HEK293 (cell line): ENCODE measurements at regions of chr7 and their contacts with region 1.

Region 1: GRCh38 chr7:74464943-74465886 is 11.5 kb downstream of the GTF2IRD1 start:
- H3K4me3 ChIP-seq: no peak overlapping the region
- H3K27ac ChIP-seq: no peak overlapping the region
- H3K4me1 ChIP-seq: peaks cover 6% of the 10 kb centered on the region; the same call in 1 of the 2 replicates
- CTCF ChIP-seq: no peak

Region 2: DNA sequence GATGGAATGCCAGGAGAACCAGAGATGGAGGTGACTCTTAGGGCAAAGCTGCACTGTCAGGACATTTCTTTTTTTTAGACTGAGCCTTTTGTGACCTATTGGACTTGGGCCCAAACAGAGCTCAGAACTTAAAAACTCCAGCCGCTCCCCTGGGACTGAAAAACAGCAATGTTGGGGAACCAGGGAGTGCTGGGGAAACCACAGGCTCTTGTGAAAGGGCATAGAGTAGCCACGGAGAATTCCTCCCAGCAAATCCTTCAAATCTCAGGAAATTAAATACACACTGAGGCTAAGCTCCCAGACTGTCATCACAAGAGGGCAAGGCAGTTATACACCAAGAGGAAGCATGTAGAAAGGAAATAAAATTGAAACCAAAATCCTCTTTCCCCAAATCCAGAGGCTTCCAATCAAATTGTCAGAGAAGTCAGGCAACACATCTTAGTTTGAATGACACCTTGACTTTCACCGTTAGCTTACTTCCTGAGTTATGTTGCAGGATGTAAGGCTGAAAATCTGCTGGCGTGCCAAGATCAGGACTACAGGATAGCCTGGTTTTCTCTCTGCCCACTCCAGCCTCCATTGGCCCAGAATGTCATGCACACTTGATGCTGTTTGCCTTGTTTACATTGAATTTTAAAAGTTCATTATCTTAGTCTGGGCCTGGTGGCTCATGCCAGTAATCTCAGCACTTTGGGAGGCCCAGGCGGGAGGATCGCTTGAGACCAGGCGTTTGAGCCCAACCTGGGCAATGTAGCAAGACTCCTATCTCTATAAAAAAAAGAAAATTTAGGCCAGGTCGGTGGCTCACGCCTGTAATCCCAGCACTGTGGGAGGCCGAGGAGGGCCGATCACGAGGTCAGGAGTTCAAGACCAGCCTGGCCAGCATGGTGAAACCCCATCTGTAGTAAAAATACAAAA is 208.5 kb before region 1 on chr7:
- CTCF ChIA-PET with region 1: no interaction called
- POLR2A ChIA-PET with region 1: no interaction called
- H3K4me3 ChIP-seq: no peak overlapping the region
- H3K27ac ChIP-seq: no peak overlapping the region
- H3K4me1 ChIP-seq: no peaks in the 10 kb centered on the region
- CTCF ChIP-seq: no peak

Region 3: GRCh38 chr7:74424291-74424880 is 40.8 kb before region 1 on chr7:
- CTCF ChIA-PET with region 1: no interaction called
- POLR2A ChIA-PET with region 1: no interaction called
- H3K4me3 ChIP-seq: no peak overlapping the region
- H3K27ac ChIP-seq: no peak overlapping the region
- H3K4me1 ChIP-seq: no peaks in the 10 kb centered on the region
- CTCF ChIP-seq: no peak

Region 4: DNA sequence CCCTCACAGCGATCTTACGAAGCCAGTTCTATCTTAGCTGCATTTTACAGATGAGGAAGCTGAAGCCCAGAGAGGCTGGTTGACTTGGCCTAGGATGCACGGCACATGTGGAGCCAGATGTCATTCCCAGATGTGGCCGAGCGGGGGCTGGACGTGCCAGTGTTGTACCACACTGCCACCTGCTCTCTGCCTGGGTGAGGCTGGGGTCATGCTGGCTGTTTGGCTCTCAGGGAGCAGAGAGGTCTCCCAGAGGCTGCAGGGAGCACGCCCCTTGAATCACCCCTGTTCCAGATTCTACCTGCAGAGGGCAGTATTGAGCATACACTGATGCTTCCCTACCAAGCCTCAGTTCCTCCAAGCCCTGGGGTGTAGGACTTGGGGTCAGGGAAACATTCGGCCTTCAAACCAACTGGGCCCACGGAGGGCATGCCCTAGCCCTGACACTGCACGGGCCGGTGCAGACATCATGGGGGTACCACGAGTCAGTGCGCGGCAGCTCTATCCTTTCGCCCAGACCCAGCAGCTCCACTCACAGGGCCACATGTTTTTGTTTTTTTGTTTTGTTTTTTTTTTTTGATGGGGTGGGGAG is 15.3 kb before region 1 on chr7:
- CTCF ChIA-PET with region 1: interaction called, 13 read pairs
- POLR2A ChIA-PET with region 1: interaction called, 4 read pairs
- H3K4me3 ChIP-seq: no peak overlapping the region
- H3K27ac ChIP-seq: no peak overlapping the region
- H3K4me1 ChIP-seq: peaks cover 2% of the 10 kb centered on the region
- CTCF ChIP-seq: peak; percentile 57; the same call in 1 of the 2 replicates